Psoas muscle (tissue), 8 donors: ENCODE measurements at regions of chrX and their contacts with region 1.

Region 1: DNA sequence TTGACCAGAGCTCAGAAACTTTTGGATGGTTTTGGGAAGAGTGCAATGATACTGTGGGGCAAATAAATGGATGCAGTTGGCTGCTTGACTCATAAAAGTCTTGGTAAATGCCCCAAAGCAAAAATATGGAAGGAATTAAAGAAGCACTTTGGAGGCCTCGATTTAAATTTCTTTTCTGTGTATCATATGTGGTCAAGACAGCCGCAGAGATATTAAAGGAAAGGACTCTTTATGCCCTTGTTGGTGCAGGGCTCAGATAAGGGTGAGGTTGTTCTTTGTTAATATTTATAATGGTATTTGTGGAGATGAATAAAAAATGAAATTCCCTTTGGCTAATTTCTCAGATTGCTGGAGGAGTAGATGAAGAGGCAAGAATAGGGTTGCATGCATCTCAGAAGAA is 90.2 kb downstream of the NHS start:
- DNase-seq: no peak
- ATAC-seq: no peak
- H3K4me3 ChIP-seq: no peak overlapping the region
- H3K27ac ChIP-seq: no peak overlapping the region
- H3K4me1 ChIP-seq: no peaks in the 10 kb centered on the region
- H3K27me3 ChIP-seq: no peaks in the 10 kb centered on the region
- CTCF ChIP-seq: no peak

Region 2: GRCh38 chrX:17477149-17477548 is 11.9 kb after region 1 on chrX:
- intact Hi-C with region 1: loop called in 1 of 2 experiments (anchors 1 kb)
- DNase-seq: no peak
- ATAC-seq: no peak
- H3K4me3 ChIP-seq: no peak overlapping the region
- H3K27ac ChIP-seq: no peak overlapping the region
- H3K4me1 ChIP-seq: no peaks in the 10 kb centered on the region
- H3K27me3 ChIP-seq: no peaks in the 10 kb centered on the region
- CTCF ChIP-seq: no peak

Region 3: DNA sequence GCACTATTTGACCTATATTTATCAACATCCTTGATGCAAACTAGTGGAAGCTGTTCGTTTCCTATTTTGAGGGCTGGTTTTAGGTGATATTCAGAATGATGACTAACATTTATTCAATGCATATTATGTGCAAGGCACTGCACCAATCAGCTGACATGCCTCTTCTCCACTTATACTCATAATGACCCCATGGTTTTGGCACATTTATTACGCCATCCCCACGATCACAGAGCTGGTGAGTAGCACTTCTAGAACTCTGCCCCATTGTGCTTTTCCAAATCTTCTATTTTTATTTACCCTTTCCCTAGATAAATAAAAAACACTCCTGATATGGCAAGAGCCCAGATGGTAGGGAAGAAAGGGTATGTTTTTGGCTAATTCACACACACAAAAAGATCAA is 285.2 kb after region 1 on chrX:
- intact Hi-C with region 1: no loop called
- DNase-seq: no peak
- ATAC-seq: peak in 2 of 4 donors; percentile 21 to 48
- H3K4me3 ChIP-seq: no peak overlapping the region
- H3K27ac ChIP-seq: no peak overlapping the region
- H3K4me1 ChIP-seq: no peaks in the 10 kb centered on the region
- H3K27me3 ChIP-seq: no peaks in the 10 kb centered on the region
- CTCF ChIP-seq: no peak